Ascending aorta (tissue), 2 donors: ENCODE measurements at regions of chr16 and their contacts with region 1.

Region 1: GRCh38 chr16:14285513-14286385 is 214.6 kb downstream of the MRTFB start:
- DNase-seq: peak; percentile 62 to 95
- H3K4me3 ChIP-seq: peak overlapping the region; percentile 80 to 88
- H3K27ac ChIP-seq: peak overlapping the region; percentile 65 to 95
- H3K4me1 ChIP-seq: peaks cover 3 to 6% of the 10 kb centered on the region in 2 donors
- H3K27me3 ChIP-seq: no peaks in the 10 kb centered on the region
- CTCF ChIP-seq: no peak

Region 2: DNA sequence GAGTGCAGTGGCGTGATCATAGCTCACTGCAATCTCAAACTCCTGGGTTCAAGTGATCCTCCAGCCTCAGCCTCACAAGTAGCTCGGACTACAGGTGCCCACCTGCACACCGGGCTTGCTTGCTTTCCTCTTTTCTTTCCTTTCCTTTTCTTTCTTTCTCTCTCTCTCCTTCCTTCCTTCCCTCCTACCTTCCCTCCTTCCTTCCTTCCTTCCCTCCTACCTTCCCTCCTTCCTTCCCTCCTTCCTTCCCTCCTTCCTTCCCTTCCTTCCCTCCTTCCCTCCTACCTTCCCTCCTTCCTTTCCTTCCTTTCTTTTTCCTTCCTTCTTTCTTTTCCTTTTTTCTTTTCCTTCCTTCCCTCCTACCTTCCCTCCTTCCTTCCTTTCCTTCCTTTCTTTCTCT is 10.9 kb after region 1 on chr16:
- intact Hi-C with region 1: no loop called
- DNase-seq: no peak
- H3K4me3 ChIP-seq: no peak overlapping the region
- H3K27ac ChIP-seq: no peak overlapping the region
- H3K4me1 ChIP-seq: peaks cover 1 to 9% of the 10 kb centered on the region in 2 donors
- H3K27me3 ChIP-seq: no peaks in the 10 kb centered on the region
- CTCF ChIP-seq: no peak

Region 3: GRCh38 chr16:14632692-14633569 is 347.2 kb after region 1 on chr16 and contains the start of gene BFAR:
- intact Hi-C with region 1: loop called (anchors 5 kb)
- DNase-seq: peak; percentile 97 to 100
- H3K4me3 ChIP-seq: peak within 1 kb of the TSS; percentile 89 to 98
- H3K27ac ChIP-seq: peak within 1 kb of the TSS; percentile 96 to 97
- H3K4me1 ChIP-seq: peaks cover 7 to 19% of the 10 kb centered on the region in 2 donors
- H3K27me3 ChIP-seq: no peaks in the 10 kb centered on the region
- CTCF ChIP-seq: peak in 1 of 3 experiments; percentile 10
- total RNA-seq, gene BFAR: 28.0 TPM